Activated CD8-positive, alpha-beta memory T cell treated with anti-CD3 and anti-CD28 coated beads, Interleukin-2, amount 10 ng/mL, durations not matched to agents 7 days and 5 days (primary cell): ENCODE measurements at regions of chr1 and their contacts with region 1.

Region 1: DNA sequence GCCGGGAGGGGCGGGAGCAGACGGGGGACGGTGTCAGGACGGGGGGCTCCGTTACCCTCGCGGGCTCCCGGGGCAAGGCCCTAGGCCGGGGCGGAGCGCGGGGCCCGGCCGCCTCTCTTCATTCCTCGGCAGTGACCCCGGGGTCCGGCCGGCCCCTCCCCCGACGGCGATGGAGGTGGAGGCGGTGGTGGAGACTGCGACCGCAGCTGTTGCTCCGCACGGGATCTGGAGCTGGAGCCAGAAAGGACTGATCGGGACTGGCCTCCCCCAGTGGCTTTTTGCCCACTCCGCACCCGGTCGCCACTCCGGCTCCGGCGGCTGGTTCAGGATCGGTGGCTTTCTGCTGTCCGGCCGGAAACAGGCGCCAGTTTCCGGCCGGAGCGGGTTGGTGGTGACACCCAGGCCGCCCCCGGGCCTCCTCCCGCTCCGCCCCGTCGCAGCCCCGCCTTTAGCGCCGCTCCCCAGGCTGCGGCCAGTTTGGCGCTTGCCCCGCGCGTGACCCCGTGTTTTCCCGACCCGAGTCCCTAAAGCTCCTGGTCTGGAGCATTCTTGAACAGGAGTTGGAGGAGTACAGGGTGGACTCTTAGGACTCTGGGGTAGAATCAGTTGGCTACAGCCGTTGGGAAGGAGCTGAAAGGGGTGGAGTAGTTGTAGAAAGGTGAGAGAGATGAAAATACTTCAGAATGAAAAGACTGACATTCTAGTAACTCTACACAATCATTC is at the start of gene OTUD7B:
- DNase-seq: peak; percentile 84
- ATAC-seq: peak; percentile 83
- H3K4me3 Mint-ChIP-seq: peak within 1 kb of the TSS; percentile 99
- H3K27ac Mint-ChIP-seq: peak within 1 kb of the TSS; percentile 92
- H3K4me1 Mint-ChIP-seq: peaks cover 32% of the 10 kb centered on the region
- H3K27me3 Mint-ChIP-seq: peaks cover 2% of the 10 kb centered on the region
- total RNA-seq, gene OTUD7B: 16.4 to 19.7 TPM

Region 2: DNA sequence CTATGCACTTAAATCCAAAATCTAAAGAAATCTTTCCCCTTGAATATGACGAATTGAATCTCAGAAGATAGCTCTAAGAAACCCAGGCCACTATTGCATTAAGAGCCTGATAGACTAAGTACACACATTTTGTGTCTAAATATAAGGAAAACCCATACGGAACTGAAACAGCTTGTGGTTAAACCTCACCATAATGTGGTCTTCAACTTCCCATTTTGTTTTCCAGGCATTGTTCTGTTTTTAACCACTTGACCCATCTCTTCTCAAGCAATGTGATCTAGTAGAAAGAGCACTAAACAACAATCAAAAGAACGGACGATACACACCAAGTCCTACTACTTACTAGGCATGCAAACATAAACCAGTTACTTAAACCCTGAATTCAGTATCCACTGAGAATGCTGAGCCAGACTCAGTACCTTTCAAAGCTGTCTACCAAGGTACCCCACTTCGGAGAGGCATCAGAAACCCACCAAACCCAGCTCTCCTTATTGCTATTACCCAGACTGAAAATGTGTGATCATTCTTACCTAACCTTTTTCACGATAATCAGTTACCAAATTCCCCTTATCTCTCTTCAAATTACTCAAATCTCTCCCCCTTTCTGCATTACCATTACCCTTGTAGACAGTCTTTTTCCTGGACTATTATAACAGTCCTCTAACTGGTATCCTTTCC is 12.8 kb before region 1 on chr1:
- CTCF ChIA-PET with region 1: interaction called, 16 read pairs
- DNase-seq: no peak
- ATAC-seq: peak; percentile 20
- H3K4me3 Mint-ChIP-seq: no peak overlapping the region
- H3K27ac Mint-ChIP-seq: peak overlapping the region; percentile 13
- H3K4me1 Mint-ChIP-seq: peaks cover 32% of the 10 kb centered on the region
- H3K27me3 Mint-ChIP-seq: no peaks in the 10 kb centered on the region